PC-3 (cell line): ENCODE measurements at regions of chr6 and their contacts with region 1.

Region 1: GRCh38 chr6:119742188-119742803 is 392.7 kb upstream of the MAN1A1 start:
- DNase-seq: peak; percentile 72
- ATAC-seq: peak; percentile 73
- H3K4me3 ChIP-seq: no peak overlapping the region
- H3K27ac ChIP-seq: no peak overlapping the region
- H3K4me1 ChIP-seq: no peaks in the 10 kb centered on the region
- H3K27me3 ChIP-seq: no peaks in the 10 kb centered on the region
- CTCF ChIP-seq: peak; percentile 89

Region 2: DNA sequence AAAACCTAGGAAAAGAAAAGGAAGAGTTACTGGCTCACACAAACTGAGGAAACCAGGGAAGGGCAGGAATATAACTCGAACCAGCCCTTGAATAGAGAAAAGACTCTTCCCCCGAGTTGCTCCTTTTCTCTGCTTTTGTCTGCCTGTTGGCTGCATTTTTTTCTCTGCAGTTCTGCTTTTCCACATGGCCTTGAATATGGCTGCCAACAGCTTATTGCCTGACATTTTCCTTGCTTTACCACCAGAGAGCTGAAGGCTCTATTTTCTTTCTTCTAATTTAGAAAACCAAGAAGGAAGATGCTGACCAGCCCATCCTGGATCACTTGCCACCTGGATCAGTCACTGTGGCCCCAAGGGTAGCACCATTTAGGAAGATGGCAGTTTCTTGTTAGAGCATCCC is 228.0 kb before region 1 on chr6:
- CTCF ChIA-PET with region 1: no interaction called
- POLR2A ChIA-PET with region 1: no interaction called
- intact Hi-C with region 1: no loop called
- DNase-seq: no peak
- ATAC-seq: no peak
- H3K4me3 ChIP-seq: no peak overlapping the region
- H3K27ac ChIP-seq: no peak overlapping the region
- H3K4me1 ChIP-seq: no peaks in the 10 kb centered on the region
- H3K27me3 ChIP-seq: no peaks in the 10 kb centered on the region
- CTCF ChIP-seq: no peak

Region 3: DNA sequence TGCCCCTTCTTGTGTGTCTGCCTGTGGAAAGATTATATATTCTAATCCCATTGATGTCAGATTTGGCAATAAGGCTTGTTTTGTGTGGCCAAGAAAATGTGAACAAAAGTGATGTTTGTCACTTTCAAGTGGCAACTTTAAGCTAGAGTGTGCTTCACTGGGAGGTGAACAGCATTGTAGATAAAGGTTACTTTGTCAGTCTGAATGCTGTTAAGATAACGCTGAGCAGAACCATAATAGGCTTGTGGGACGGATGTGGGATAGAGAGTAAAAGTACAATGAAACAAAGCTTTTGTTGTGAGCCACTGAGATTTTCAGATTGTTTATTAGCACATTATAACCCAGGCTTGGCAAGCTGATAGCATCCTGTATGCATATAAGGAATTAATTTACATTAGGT is 89.0 kb before region 1 on chr6:
- CTCF ChIA-PET with region 1: no interaction called
- POLR2A ChIA-PET with region 1: no interaction called
- intact Hi-C with region 1: no loop called
- DNase-seq: no peak
- ATAC-seq: no peak
- H3K4me3 ChIP-seq: no peak overlapping the region
- H3K27ac ChIP-seq: no peak overlapping the region
- H3K4me1 ChIP-seq: no peaks in the 10 kb centered on the region
- H3K27me3 ChIP-seq: no peaks in the 10 kb centered on the region
- CTCF ChIP-seq: no peak

Region 4: DNA sequence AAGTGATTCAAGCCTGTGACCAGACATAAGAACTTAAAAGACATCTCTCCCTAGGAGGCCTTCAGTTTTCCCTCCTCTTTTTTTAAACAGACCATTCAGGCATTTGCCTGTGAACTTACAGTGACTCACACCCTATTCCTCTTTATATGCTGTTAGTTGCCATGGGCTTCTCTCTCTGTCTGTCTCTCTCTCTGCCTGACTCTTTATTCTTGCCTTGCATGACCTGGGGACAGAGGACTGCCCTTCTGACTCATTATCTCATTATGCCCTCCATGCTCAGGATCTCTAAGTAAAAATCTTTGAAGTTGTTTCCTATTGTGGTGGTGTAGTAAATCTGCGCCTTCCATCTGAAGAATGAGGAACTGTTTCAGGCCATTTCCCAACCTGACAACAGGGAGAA is 49.5 kb after region 1 on chr6:
- CTCF ChIA-PET with region 1: no interaction called
- POLR2A ChIA-PET with region 1: no interaction called
- intact Hi-C with region 1: no loop called
- DNase-seq: peak; percentile 20
- ATAC-seq: peak; percentile 55
- H3K4me3 ChIP-seq: no peak overlapping the region
- H3K27ac ChIP-seq: no peak overlapping the region
- H3K4me1 ChIP-seq: no peaks in the 10 kb centered on the region
- H3K27me3 ChIP-seq: no peaks in the 10 kb centered on the region
- CTCF ChIP-seq: no peak

Region 5: GRCh38 chr6:119978274-119978889 is 236.1 kb after region 1 on chr6:
- CTCF ChIA-PET with region 1: no interaction called
- POLR2A ChIA-PET with region 1: no interaction called
- intact Hi-C with region 1: loop called (anchors 1 kb)
- DNase-seq: peak; percentile 51
- ATAC-seq: peak; percentile 64
- H3K4me3 ChIP-seq: no peak overlapping the region
- H3K27ac ChIP-seq: no peak overlapping the region
- H3K4me1 ChIP-seq: no peaks in the 10 kb centered on the region
- H3K27me3 ChIP-seq: no peaks in the 10 kb centered on the region
- CTCF ChIP-seq: peak; percentile 81

Region 6: DNA sequence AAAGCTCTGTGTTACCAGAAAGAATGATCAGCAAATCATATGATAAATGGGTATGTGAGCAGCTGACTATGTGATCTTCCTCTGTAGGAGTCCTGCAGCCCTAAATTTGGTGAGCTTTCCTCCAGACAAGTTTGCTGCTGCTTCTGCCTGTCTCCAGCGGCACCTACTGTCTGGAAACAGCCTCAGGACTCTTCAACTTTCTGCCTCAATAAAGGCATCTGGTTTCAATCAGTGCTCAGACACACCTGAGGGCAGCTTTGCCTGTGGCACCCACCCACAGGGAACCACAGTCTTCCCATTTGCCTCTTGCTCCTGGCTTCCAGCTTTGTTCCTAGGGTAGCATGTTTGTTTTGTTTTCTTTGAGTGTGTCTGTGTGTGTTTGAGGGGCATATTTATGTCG is 335.2 kb after region 1 on chr6:
- CTCF ChIA-PET with region 1: no interaction called
- POLR2A ChIA-PET with region 1: no interaction called
- intact Hi-C with region 1: loop called (anchors 1 kb)
- DNase-seq: peak; percentile 45
- ATAC-seq: peak; percentile 86
- H3K4me3 ChIP-seq: no peak overlapping the region
- H3K27ac ChIP-seq: no peak overlapping the region
- H3K4me1 ChIP-seq: no peaks in the 10 kb centered on the region
- H3K27me3 ChIP-seq: no peaks in the 10 kb centered on the region
- CTCF ChIP-seq: peak; percentile 56

Region 7: DNA sequence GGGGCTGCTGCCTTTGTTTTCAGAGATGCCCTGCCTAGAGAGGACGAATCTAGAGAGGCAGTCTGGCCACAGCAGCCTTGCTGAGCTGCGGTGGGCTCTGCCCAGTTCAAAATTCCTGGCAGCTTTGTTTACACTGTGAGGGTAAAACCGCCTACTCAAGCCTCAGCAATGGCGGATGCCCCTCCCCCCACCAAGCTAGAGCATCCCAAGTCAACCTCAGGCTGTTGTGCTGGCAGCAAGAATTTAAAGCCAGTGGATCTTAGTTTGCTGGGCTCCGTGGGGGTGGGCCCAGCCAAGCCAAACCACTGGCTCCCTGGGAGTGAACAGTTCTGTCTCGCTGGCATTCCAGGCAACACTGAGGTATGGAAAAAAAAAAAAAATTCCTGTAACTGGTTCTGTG is 621.1 kb after region 1 on chr6:
- CTCF ChIA-PET with region 1: no interaction called
- POLR2A ChIA-PET with region 1: no interaction called
- intact Hi-C with region 1: no loop called
- DNase-seq: no peak
- ATAC-seq: no peak
- H3K4me3 ChIP-seq: no peak overlapping the region
- H3K27ac ChIP-seq: no peak overlapping the region
- H3K4me1 ChIP-seq: no peaks in the 10 kb centered on the region
- H3K27me3 ChIP-seq: no peaks in the 10 kb centered on the region
- CTCF ChIP-seq: no peak

Region 8: DNA sequence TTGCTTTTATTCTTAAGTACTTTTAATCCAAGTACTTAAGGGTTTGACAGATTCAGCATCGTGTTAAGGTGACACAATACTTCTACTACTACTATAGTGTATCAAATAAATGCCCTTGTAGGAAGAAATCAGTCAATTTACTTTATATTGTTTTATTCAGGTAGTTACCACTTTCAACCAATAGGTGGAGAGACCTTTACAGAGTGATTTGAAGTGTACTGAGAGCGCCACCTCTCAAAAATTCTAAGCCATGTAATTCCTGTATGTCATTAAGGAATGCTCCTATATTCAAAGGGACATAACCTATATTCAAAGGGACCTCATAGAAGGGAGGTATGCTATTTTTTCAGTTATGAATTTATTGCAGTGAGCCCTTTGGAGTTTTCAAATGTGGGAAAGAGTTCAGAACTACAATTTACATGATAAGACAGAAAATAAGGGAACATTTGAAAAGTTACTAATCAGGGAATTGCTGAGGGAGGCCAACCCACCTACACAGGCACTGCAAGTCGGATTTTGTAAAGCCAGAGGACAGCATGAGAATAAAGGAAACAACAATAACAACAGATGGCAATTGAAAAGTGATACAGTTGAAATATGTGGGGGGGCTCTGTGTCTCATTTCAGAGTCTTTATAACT is 636.4 kb after region 1 on chr6:
- CTCF ChIA-PET with region 1: no interaction called
- POLR2A ChIA-PET with region 1: no interaction called
- intact Hi-C with region 1: loop called (anchors 5 kb)
- DNase-seq: peak; percentile 70
- ATAC-seq: peak; percentile 81
- H3K4me3 ChIP-seq: no peak overlapping the region
- H3K27ac ChIP-seq: no peak overlapping the region
- H3K4me1 ChIP-seq: no peaks in the 10 kb centered on the region
- H3K27me3 ChIP-seq: no peaks in the 10 kb centered on the region
- CTCF ChIP-seq: peak; percentile 92

Region 9: DNA sequence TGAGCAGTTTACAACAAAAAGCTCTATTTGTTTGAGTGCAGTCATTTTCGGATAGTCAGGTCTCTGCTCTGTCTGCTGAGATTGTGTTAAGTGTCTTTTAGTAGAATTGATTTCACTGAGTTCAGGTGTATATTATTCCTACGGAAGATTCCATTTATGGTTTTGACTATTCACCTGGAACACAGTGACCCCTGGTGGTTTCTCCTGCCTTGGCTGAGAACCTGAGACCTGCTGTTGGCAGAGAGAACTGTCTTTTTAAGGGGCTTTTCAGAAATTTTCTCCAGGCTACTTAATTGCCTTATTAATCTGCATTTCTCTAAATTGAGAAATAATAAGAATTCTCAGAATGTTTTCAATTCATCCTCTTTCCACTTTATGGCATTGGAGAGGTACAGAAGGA is 1084.0 kb after region 1 on chr6:
- CTCF ChIA-PET with region 1: no interaction called
- POLR2A ChIA-PET with region 1: no interaction called
- intact Hi-C with region 1: loop called (anchors 1 kb)
- DNase-seq: peak; percentile 65
- ATAC-seq: peak; percentile 53
- H3K4me3 ChIP-seq: no peak overlapping the region
- H3K27ac ChIP-seq: no peak overlapping the region
- H3K4me1 ChIP-seq: peaks cover 8% of the 10 kb centered on the region
- H3K27me3 ChIP-seq: no peaks in the 10 kb centered on the region
- CTCF ChIP-seq: peak; percentile 77